ENCODE measurements at regions of chr2 and their contacts with region 1.

Region 1: DNA sequence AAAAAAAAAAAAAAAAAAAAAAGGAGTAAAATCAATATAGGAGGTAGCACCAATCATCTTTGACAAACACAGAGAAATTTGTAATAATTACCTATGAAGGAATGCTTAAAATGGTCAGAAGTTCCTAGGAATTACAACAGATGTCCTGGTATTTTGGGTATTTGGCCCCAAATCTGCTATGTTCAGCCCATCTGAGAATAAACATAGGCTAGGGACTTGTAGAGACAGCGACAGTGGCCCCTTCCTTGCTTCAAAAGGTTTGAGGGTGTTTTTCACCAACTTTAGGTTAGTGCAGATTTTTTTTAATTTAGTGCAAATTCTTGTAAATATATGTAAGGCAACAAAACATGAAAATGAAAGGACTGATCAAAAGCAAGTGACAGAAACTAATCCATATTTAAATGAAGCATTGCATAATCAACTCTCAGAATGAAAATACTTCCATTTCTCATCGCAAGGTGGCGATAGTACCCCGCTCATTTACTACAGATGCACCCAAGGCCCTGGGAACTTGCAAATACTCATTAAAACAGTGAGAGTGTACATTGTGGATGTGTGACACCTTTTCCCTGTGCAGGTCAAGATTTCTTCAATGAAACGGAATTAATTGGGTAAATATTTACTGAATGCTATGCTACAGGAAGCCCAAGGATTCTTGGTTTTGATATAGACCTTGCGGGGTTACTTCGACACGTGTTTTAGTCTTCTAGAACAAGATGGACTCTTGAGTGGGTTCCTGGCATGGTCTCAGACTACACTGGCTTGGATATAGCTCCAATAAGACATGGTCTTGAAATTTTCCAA is 44.6 kb downstream of the FAM124B start:
- DNase-seq: peak in 4 of 10 donors; percentile 16 to 47 (median 34)

Region 2: DNA sequence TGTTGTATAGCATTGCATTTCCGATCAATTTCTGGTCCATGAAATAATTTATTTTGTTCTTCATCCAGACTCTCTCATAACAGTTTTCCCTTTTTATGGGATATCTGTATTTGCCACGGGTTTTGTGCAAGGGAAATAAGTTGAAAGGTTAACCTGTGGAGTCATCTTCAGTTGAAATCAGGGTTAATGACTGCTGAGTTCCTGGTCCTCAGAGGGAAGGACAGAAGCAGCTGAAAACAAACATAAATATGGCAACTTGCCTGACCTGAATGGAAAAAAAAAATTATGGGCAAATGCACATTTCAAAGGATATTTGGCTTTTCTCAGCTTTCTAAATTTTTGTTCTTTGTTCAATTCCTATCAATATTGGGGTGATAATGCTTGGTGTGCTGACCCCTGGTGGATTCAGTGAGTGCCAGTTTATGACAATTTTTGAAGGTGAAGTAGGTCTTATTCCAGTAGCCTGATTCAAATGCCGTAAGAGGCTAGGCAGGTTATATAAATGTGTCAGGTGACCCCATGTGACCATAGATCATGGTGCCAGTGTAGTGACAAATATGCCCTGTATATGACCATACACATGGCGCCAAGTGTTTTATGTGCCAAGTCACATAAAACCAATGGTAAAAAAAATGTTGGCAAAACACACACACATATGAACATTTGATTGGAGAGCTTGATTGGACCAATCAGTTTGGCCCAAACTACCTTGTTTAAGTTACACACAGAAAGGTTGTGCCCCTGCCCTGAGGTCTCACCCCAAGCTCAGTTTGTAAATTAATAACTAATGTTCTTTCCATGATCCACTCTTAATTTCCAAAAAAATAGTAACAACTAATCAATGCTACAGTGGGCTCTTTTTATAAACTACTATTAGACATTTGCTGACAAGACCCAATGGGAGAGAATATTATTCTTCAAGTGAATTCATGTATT is 92.2 kb after region 1 on chr2:
- intact Hi-C with region 1: loop called (anchors 5 kb)
- DNase-seq: no peak

Region 3: GRCh38 chr2:224650815-224651439 is 293.6 kb after region 1 on chr2:
- intact Hi-C with region 1: loop called (anchors 1 kb)
- DNase-seq: no peak

Region 4: DNA sequence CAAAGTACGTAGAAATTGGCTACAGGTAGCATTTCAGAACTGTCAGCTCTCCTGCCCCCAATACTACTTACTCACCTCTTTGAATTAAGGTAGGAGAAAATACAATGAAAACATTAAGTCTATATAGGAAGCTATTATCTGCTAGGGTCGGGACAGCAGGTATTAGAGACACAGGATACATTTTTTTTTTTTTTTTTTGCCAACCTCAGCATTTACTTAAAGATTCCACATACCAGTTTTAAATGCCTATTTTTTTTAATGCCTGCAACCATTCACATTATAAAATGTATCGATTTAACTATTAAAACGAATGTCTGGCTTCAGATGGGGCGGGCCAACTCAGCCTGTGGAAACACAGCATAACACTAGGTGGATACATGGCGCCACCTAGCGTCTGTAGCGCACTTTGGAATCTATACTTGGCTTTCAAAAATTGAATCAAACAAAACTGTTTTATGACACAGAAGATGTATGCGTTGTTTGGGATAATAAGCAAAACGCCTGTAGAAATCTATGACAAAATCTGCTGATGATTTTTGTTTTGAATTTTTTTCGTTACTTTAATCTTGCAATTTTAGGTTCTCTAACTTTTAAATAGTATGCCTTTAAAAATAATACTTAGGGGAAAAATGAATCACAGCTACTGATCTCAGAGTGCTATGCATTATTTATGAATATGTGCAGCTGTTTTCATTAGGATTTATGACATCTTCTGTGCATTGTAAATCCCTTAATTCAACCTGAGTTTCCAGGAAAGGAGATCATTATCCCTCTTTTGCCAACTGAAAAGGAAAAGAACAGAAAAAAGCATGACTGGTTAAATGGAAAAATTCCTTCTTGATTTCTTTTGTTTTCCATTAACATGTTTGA is 1303.2 kb after region 1 on chr2:
- intact Hi-C with region 1: loop called (anchors 10 kb)
- DNase-seq: peak; percentile 55 to 96 (median 85)

Measured in posterior cingulate gyrus (tissue), 11 donors.